Activated CD8-positive, alpha-beta T cell treated with anti-CD3 and anti-CD28 coated beads, Interleukin-2, amount 10 ng/mL, durations not matched to agents 7 days and 5 days (primary cell): ENCODE measurements at regions of chr12 and their contacts with region 1.

Region 1: GRCh38 chr12:49842519-49843352 is at the start of gene BCDIN3D:
- DNase-seq: peak; percentile 93
- ATAC-seq: peak; percentile 96
- H3K4me3 Mint-ChIP-seq: peak within 1 kb of the TSS; percentile 92
- H3K27ac Mint-ChIP-seq: peak within 1 kb of the TSS; percentile 86
- H3K4me1 Mint-ChIP-seq: peaks cover 51% of the 10 kb centered on the region
- H3K27me3 Mint-ChIP-seq: no peaks in the 10 kb centered on the region
- total RNA-seq, gene BCDIN3D: 7.3 to 7.4 TPM

Region 2: GRCh38 chr12:49478949-49479664 is 363.6 kb before region 1 on chr12:
- CTCF ChIA-PET with region 1: no interaction called
- POLR2A ChIA-PET with region 1: no interaction called
- DNase-seq: no peak
- ATAC-seq: no peak
- H3K4me3 Mint-ChIP-seq: no peak overlapping the region
- H3K27ac Mint-ChIP-seq: no peak overlapping the region
- H3K4me1 Mint-ChIP-seq: peaks cover 14% of the 10 kb centered on the region
- H3K27me3 Mint-ChIP-seq: no peaks in the 10 kb centered on the region

Region 3: GRCh38 chr12:49750027-49750995 is 92.4 kb before region 1 on chr12:
- CTCF ChIA-PET with region 1: interaction called, 11 read pairs
- POLR2A ChIA-PET with region 1: interaction called, 3 read pairs
- DNase-seq: peak; percentile 59
- ATAC-seq: peak; percentile 85
- H3K4me3 Mint-ChIP-seq: peak overlapping the region; percentile 9
- H3K27ac Mint-ChIP-seq: peak overlapping the region; percentile 72
- H3K4me1 Mint-ChIP-seq: peaks cover 76% of the 10 kb centered on the region
- H3K27me3 Mint-ChIP-seq: no peaks in the 10 kb centered on the region

Region 4: DNA sequence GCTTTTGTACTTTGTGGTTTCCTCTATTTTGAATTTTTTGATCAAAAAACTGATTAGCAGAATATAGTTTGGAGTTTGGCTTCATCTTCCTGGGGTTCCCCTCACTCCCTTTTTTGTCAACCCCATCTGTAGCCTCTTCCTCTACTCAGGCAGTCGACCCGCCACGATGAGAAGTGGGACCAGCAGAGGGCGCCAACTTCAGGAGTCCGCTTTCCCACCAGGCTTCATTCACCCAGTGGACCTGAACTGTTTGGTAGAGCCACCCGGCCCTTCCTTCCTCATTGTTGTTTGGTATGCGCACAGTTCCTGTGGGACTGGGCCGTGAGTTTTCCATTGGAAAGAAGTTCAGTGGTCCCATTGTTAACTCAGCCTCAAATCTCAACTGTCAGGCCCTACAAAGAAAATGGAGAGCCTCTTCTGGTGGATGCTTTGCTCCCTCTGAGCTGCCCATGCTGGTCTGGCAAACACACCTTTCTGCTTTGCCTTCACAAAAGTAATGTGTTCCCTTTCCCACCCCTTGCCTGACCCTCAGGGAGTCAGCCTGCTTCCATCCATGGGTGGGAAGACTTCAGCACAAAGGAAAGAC is 79.6 kb before region 1 on chr12:
- CTCF ChIA-PET with region 1: interaction called, 88 read pairs
- POLR2A ChIA-PET with region 1: interaction called, 3 read pairs
- DNase-seq: peak; percentile 85
- ATAC-seq: peak; percentile 74
- H3K4me3 Mint-ChIP-seq: peak overlapping the region; percentile 42
- H3K27ac Mint-ChIP-seq: peak overlapping the region; percentile 94
- H3K4me1 Mint-ChIP-seq: peaks cover 60% of the 10 kb centered on the region
- H3K27me3 Mint-ChIP-seq: no peaks in the 10 kb centered on the region

Region 5: GRCh38 chr12:49783917-49784676 is 58.6 kb before region 1 on chr12:
- CTCF ChIA-PET with region 1: interaction called, 129 read pairs
- POLR2A ChIA-PET with region 1: interaction called, 4 read pairs
- DNase-seq: no peak
- ATAC-seq: no peak
- H3K4me3 Mint-ChIP-seq: no peak overlapping the region
- H3K27ac Mint-ChIP-seq: no peak overlapping the region
- H3K4me1 Mint-ChIP-seq: no peaks in the 10 kb centered on the region
- H3K27me3 Mint-ChIP-seq: peaks cover 37% of the 10 kb centered on the region

Region 6: GRCh38 chr12:49800421-49801140 is 42.2 kb before region 1 on chr12:
- CTCF ChIA-PET with region 1: interaction called, 10 read pairs
- POLR2A ChIA-PET with region 1: interaction called, 5 read pairs
- DNase-seq: no peak
- ATAC-seq: no peak
- H3K4me3 Mint-ChIP-seq: no peak overlapping the region
- H3K27ac Mint-ChIP-seq: no peak overlapping the region
- H3K4me1 Mint-ChIP-seq: no peaks in the 10 kb centered on the region
- H3K27me3 Mint-ChIP-seq: no peaks in the 10 kb centered on the region

Region 7: GRCh38 chr12:49821373-49822287 is 21.1 kb before region 1 on chr12:
- CTCF ChIA-PET with region 1: interaction called, 15 read pairs
- POLR2A ChIA-PET with region 1: interaction called, 10 read pairs
- DNase-seq: no peak
- ATAC-seq: no peak
- H3K4me3 Mint-ChIP-seq: peak overlapping the region; percentile 34
- H3K27ac Mint-ChIP-seq: peak overlapping the region; percentile 93
- H3K4me1 Mint-ChIP-seq: peaks cover 37% of the 10 kb centered on the region
- H3K27me3 Mint-ChIP-seq: no peaks in the 10 kb centered on the region

Region 8: GRCh38 chr12:49828133-49829091 is 14.3 kb before region 1 on chr12 and contains the start of gene NCKAP5L:
- CTCF ChIA-PET with region 1: interaction called, 32 read pairs
- POLR2A ChIA-PET with region 1: interaction called, 15 read pairs
- DNase-seq: peak; percentile 96
- ATAC-seq: peak; percentile 97
- H3K4me3 Mint-ChIP-seq: peak within 1 kb of the TSS; percentile 94
- H3K27ac Mint-ChIP-seq: peak within 1 kb of the TSS; percentile 94
- H3K4me1 Mint-ChIP-seq: peaks cover 27% of the 10 kb centered on the region
- H3K27me3 Mint-ChIP-seq: no peaks in the 10 kb centered on the region
- total RNA-seq, gene NCKAP5L: 7.2 to 7.7 TPM